Activated T-helper 2 cell treated with anti-CD3 and anti-CD28 coated beads, Interferon-gamma antibody, Interleukin-2, Interleukin-4, amounts not matched to agents 10 μg/mL and 5 μg/mL and 100 μg/mL, durations not matched to agents 14 hours and 24 hours and 36 hours (primary cell): ENCODE measurements at regions of chr5 and their contacts with region 1.

Region 1: DNA sequence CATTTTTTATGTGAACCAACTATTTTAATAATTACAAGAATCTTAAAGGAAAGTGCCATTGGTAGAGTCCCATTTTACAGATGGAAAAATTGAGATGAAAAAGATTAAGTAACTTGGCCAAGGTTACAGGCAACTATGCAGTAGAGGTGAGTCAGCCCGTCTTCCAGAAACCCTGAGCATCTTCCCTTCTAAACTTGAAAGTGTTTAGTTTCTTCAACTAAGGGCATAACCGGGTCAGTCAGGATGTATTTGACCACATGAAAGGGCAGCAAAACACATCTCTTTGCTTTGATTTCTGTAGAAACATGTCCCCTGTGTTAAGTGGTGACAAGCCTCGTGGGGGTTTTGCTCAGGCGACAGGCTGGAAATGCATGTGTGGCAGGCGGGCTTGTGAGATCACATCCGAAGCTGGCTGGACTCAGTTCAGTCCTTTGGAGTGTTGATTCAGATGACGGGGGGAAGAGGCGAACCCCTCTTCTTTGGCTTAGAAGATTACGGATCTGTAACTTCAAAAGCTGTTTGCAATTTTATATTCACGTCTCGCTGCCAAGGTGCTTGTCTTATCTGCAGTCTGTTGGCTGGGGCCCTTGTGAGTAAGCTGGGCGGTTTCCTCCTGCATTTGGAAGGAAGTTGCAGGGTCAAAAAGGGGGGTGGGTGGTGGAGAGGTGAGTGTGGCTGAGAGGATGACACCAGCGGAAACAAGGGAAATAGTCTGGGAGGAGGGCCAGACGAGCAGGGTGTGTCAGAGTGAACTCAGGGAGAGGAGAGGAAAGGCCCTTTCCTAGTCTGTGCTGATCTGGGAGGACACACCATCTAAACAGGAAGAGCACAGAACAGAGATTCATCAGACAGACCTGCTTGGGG is 78.9 kb upstream of the RPS23 start:
- DNase-seq: peak; percentile 70
- H3K4me3 Mint-ChIP-seq: peak overlapping the region; percentile 62
- H3K27ac Mint-ChIP-seq: peak overlapping the region; percentile 95
- H3K4me1 Mint-ChIP-seq: peaks cover 56% of the 10 kb centered on the region
- H3K27me3 Mint-ChIP-seq: no peaks in the 10 kb centered on the region

Region 2: DNA sequence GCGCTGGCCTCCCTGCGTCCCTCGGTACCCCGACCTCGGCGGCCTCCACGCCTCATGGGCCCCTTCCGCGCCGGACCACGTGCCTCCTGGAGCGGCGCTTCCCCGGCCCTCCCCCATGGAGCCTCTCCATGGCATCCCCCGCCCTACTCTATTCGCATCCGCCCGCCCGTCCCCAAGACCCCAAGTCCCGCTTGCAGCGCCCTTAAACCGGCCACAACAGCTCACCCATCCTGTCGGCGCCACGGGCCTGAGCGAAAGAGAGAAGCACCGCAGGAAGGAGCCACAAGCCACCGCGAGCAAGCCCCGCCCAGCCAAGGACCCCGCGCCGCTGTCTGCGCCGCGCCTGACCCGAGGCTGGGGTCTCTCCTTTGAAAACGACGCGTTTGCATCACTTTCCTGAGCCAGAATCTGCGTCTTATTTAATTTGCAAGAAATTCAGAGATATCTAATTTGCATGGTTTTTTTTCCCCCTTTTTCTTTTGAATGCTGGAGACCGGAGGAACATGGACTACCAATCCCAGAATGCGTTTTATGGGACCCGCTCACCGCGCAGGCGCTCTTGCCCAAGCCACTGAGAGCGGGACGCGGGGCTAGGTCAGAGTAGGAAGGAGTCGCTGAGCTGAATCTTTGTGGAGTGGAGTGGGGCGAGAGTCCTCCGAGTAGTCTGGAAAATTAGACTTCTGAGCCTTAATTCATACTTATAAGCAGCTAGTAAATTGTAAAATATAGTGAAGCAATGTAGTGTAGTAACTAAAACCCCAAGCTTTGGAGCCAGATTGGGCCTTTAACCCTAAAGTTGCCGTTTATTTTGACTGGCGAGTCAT is 78.7 kb before region 1 on chr5 and contains the start of gene RPS23:
- intact Hi-C with region 1: loop called (anchors 2 kb)
- DNase-seq: peak; percentile 82
- H3K4me3 Mint-ChIP-seq: peak within 1 kb of the TSS; percentile 92
- H3K27ac Mint-ChIP-seq: peak within 1 kb of the TSS; percentile 97
- H3K4me1 Mint-ChIP-seq: peaks cover 35% of the 10 kb centered on the region
- H3K27me3 Mint-ChIP-seq: no peaks in the 10 kb centered on the region
- total RNA-seq, gene RPS23: 2,718 and 2,741 TPM in 2 replicates

Region 3: DNA sequence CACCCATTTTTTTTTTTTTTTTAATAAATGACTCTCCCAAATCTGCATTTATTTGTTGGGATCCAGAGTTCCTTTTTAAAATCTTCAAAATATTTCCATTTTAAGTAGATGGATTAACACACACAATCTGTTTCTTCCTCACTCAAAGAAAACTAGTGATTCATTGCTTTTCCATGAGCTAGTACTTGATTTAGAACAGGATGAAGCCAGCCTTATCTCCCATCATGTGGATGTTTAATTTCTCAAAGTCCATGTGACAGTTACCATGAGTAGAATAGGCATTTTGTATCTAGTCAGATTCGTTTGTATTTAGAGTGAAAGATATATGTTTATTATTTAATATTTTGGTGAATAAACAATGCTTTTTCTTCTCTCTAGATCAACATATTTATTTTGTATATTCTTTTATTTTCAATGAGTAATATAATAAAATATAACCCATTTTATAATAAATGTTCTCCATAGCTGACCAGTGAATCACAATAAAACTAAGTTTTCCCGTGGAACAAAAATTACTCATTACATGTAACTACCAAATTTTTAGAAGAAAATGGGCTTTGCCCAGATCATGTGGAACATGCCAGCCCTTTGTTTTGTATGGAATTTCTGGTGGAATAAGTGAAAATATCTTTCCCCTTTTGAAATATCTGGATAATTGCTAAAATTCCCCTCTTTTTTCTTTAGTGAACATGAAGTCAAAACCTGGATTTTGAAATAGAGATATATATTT is 24.0 kb before region 1 on chr5:
- intact Hi-C with region 1: no loop called
- DNase-seq: no peak
- H3K4me3 Mint-ChIP-seq: no peak overlapping the region
- H3K27ac Mint-ChIP-seq: no peak overlapping the region
- H3K4me1 Mint-ChIP-seq: no peaks in the 10 kb centered on the region
- H3K27me3 Mint-ChIP-seq: peaks cover 19% of the 10 kb centered on the region

Region 4: DNA sequence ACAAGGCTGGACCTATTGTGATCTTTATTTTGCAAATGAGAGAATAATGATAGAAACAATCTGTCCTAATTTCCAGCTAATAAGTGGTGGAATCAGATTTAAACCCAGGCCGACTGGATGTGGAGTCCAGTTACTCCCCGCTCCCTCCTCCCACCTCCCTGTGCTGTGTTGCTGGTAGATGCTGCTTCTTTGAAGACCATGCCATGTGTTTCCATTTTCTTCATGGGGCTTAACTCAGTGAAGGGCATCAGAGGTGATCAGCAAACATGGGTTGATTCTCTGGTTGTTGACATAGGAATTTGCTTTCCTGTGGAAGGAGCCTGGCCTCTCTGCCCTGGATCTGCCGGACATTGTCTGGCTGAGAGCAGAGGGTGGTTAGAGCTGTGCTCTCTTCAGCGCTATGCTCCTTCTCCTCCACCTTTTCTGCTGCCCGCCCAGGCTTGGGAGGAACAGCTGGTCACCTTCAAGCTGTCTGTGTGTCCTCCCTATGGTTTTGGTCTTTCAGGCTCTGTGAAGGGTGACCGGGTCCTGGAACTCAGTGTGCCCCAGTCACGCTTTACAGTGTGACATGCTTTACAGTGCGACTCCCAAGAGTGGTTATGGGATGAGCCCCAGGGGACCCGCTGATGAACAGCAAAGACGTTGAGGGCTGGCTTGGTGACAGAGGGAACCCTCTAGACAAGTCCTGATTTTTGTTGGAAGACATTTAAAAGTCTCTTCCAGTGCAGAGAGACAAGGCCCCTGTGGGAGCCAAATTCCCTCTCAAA is 10.5 kb before region 1 on chr5:
- intact Hi-C with region 1: no loop called
- DNase-seq: no peak
- H3K4me3 Mint-ChIP-seq: no peak overlapping the region
- H3K27ac Mint-ChIP-seq: no peak overlapping the region
- H3K4me1 Mint-ChIP-seq: peaks cover 15% of the 10 kb centered on the region
- H3K27me3 Mint-ChIP-seq: peaks cover 2% of the 10 kb centered on the region

Region 5: GRCh38 chr5:82466986-82467561 is 110.0 kb after region 1 on chr5:
- intact Hi-C with region 1: loop called (anchors 5 kb)
- DNase-seq: no peak
- H3K4me3 Mint-ChIP-seq: no peak overlapping the region
- H3K27ac Mint-ChIP-seq: no peak overlapping the region
- H3K4me1 Mint-ChIP-seq: no peaks in the 10 kb centered on the region
- H3K27me3 Mint-ChIP-seq: no peaks in the 10 kb centered on the region

Region 6: DNA sequence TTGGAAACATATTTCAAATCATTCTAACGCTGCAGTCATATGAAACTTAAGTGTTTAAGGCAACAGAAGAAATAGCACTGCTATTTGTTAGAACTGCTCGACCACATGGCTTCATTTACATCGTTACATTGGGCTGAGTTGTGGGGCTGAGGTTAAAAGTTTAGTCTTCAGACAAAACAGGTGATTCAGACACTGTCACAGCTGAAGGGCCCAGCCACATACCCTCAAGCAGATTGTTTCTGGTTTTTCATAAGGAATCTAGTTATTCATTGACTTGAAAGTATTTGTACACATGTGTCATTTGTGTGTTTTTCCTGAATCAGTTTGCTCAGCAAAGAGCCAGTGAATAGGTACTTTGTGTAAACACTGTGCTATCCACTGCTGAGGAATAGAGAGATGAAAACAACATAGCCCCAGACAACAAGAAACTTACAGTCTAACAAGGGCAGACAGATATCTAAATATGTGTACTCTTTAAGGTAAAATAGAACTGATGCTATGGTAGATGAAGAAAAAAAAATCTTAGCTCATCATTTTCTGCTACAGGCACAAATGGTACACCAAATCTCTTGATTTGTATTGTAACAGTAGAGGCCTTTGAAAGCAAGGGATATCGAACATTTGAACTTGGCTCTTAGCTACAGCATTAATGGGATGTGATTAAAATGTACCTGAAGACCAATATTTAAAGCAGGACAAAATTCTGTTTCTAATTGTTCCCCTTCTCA is 278.7 kb after region 1 on chr5:
- intact Hi-C with region 1: loop called (anchors 5 kb)
- DNase-seq: no peak
- H3K4me3 Mint-ChIP-seq: no peak overlapping the region
- H3K27ac Mint-ChIP-seq: no peak overlapping the region
- H3K4me1 Mint-ChIP-seq: peaks cover 10% of the 10 kb centered on the region
- H3K27me3 Mint-ChIP-seq: no peaks in the 10 kb centered on the region

Region 7: GRCh38 chr5:82676661-82677060 is 319.6 kb after region 1 on chr5:
- intact Hi-C with region 1: loop called (anchors 2 kb)
- DNase-seq: peak; percentile 14
- H3K4me3 Mint-ChIP-seq: peak overlapping the region; percentile 31
- H3K27ac Mint-ChIP-seq: peak overlapping the region; percentile 87
- H3K4me1 Mint-ChIP-seq: peaks cover 22% of the 10 kb centered on the region
- H3K27me3 Mint-ChIP-seq: no peaks in the 10 kb centered on the region

Region 8: GRCh38 chr5:83076742-83077661 is 720.0 kb after region 1 on chr5 and contains the starts of genes TMEM167A and XRCC4:
- intact Hi-C with region 1: loop called (anchors 2 kb)
- DNase-seq: peak; percentile 93
- H3K4me3 Mint-ChIP-seq: peak within 1 kb of the TSS; percentile 97
- H3K27ac Mint-ChIP-seq: peak within 1 kb of the TSS; percentile 96
- H3K4me1 Mint-ChIP-seq: peaks cover 41% of the 10 kb centered on the region
- H3K27me3 Mint-ChIP-seq: no peaks in the 10 kb centered on the region
- total RNA-seq, gene TMEM167A: 67.7 and 70.9 TPM in 2 replicates
- total RNA-seq, gene XRCC4: 10.5 and 10.7 TPM in 2 replicates

Region 9: GRCh38 chr5:83473346-83474163 is 1116.5 kb after region 1 on chr5:
- intact Hi-C with region 1: loop called (anchors 5 kb)
- DNase-seq: peak; percentile 38
- H3K4me3 Mint-ChIP-seq: peak overlapping the region; percentile 82
- H3K27ac Mint-ChIP-seq: no peak overlapping the region
- H3K4me1 Mint-ChIP-seq: peaks cover 20% of the 10 kb centered on the region
- H3K27me3 Mint-ChIP-seq: peaks cover 79% of the 10 kb centered on the region